OCI-LY7 (cell line): ENCODE measurements at regions of chr1 and their contacts with region 1.

Region 1: GRCh38 chr1:36385410-36386257 is at the start of gene STK40:
- DNase-seq: peak; percentile 100
- H3K4me3 ChIP-seq: peak within 1 kb of the TSS; percentile 96
- H3K27ac ChIP-seq: peak within 1 kb of the TSS; percentile 98
- H3K4me1 ChIP-seq: peaks cover 59% of the 10 kb centered on the region
- CTCF ChIP-seq: no peak
- total RNA-seq, gene STK40: 41.9 and 43.8 TPM in 2 replicates

Region 2: DNA sequence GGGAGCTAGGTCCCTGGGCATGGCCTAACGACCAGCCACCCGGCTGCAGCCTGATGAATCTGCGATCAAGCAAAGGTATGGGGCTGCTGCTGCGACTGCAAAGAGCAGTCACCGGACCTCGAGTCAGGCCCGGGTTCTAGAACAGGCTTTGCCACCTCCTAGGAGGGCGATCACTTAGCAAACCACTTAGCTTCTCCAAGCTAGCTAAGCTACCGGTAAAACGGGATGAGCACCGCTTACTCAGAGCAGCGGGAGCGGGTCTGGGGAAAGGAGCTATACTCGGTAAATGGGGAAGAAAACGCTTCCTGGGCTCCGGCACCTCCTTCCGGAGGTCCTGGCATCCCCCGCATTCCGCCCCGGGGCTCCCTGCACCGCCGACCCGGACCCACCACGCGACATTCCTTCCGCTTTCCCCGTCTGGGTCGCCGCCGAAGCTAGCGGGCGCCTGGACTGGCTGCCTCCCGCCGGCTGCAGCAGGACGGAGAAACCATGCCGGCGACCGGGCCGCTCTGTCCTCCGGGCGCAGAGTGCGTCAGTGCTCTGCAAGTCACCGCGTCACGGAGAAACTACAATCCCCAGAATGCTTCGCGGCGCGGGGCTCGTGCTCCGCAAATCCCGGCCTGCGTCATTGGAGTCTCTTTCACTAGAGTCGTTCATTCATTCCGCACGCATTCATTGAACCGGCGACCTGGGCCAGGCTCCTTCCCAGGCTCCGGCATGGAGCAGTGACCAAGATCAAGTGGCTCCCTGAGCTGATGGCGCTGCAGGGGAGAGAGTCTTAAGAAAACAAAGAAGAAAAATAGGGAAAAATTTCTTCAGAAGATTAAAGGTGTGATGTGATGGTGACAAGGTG is 12.0 kb after region 1 on chr1 and contains the start of gene LSM10:
- CTCF ChIA-PET with region 1: interaction called, 9 read pairs
- POLR2A ChIA-PET with region 1: interaction called, 49 read pairs
- intact Hi-C with region 1: no loop called
- DNase-seq: peak; percentile 94
- H3K4me3 ChIP-seq: peak within 1 kb of the TSS; percentile 77
- H3K27ac ChIP-seq: peak within 1 kb of the TSS; percentile 61
- H3K4me1 ChIP-seq: peaks cover 53% of the 10 kb centered on the region
- CTCF ChIP-seq: no peak
- total RNA-seq, gene LSM10: 42.3 and 43.2 TPM in 2 replicates